Natural killer cell (primary cell): ENCODE measurements at regions of chr15 and their contacts with region 1.

Region 1: DNA sequence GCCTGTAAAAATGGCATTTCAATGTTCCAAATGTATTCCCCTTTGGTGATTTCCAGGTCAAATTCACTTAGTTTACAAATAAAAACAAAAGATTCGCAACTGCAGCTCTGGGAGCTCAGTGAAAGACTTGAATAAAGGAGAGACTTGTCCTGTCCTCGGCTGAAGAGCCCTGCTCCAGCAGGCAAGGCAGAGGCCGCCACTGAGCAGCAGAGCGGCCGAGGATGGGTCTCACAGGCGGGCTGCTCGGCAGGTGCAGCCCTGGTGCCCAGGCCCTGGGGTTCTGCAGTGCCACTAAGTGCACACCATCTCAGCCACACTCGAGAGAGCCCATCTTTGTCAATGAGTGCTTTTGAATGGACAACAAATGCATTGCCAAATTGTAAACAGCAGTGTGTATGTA is 856.2 kb downstream of the AGBL1 start:
- DNase-seq: no peak
- ATAC-seq: no peak
- H3K4me3 ChIP-seq: no peak overlapping the region
- H3K4me3 Mint-ChIP-seq: no peak overlapping the region
- H3K27ac ChIP-seq: no peak overlapping the region
- H3K27ac Mint-ChIP-seq: no peak overlapping the region
- H3K4me1 ChIP-seq: no peaks in the 10 kb centered on the region
- H3K4me1 Mint-ChIP-seq: no peaks in the 10 kb centered on the region
- H3K27me3 ChIP-seq: no peaks in the 10 kb centered on the region
- H3K27me3 Mint-ChIP-seq: no peaks in the 10 kb centered on the region
- CTCF ChIP-seq: no peak

Region 2: DNA sequence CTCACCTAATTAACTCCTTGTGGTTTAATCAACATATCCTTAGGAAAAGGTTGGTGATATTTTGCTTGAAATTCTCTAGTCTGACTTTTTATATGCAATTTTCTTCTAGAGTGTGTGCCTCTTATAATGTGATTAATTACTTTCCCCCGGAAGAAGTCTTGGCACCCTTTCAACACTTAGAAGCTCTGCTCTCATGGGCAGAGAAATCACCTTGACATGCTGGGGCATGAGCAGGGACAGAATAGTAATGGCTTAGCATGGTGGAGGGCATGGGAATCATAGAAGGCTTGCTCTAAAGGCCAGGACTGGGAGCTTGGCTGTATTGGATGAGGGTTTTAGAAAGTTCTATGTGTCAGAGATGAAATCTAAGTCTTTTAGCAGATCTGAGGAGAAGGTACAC is 562.7 kb before region 1 on chr15:
- intact Hi-C with region 1: no loop called
- DNase-seq: no peak
- ATAC-seq: no peak
- H3K4me3 ChIP-seq: no peak overlapping the region
- H3K4me3 Mint-ChIP-seq: no peak overlapping the region
- H3K27ac ChIP-seq: no peak overlapping the region
- H3K27ac Mint-ChIP-seq: no peak overlapping the region
- H3K4me1 ChIP-seq: no peaks in the 10 kb centered on the region
- H3K4me1 Mint-ChIP-seq: no peaks in the 10 kb centered on the region
- H3K27me3 ChIP-seq: no peaks in the 10 kb centered on the region
- H3K27me3 Mint-ChIP-seq: peaks cover 0 to 4% of the 10 kb centered on the region in 2 donors
- CTCF ChIP-seq: no peak

Region 3: GRCh38 chr15:86892774-86893449 is 42.9 kb before region 1 on chr15:
- intact Hi-C with region 1: no loop called
- DNase-seq: no peak
- ATAC-seq: no peak
- H3K4me3 ChIP-seq: no peak overlapping the region
- H3K4me3 Mint-ChIP-seq: no peak overlapping the region
- H3K27ac ChIP-seq: no peak overlapping the region
- H3K27ac Mint-ChIP-seq: no peak overlapping the region
- H3K4me1 ChIP-seq: no peaks in the 10 kb centered on the region
- H3K4me1 Mint-ChIP-seq: no peaks in the 10 kb centered on the region
- H3K27me3 ChIP-seq: no peaks in the 10 kb centered on the region
- H3K27me3 Mint-ChIP-seq: no peaks in the 10 kb centered on the region
- CTCF ChIP-seq: no peak

Region 4: GRCh38 chr15:86988033-86988432 is 52.2 kb after region 1 on chr15:
- intact Hi-C with region 1: loop called (anchors 10 kb)
- DNase-seq: no peak
- ATAC-seq: no peak
- H3K4me3 ChIP-seq: no peak overlapping the region
- H3K4me3 Mint-ChIP-seq: no peak overlapping the region
- H3K27ac ChIP-seq: no peak overlapping the region
- H3K27ac Mint-ChIP-seq: no peak overlapping the region
- H3K4me1 ChIP-seq: no peaks in the 10 kb centered on the region
- H3K4me1 Mint-ChIP-seq: no peaks in the 10 kb centered on the region
- H3K27me3 ChIP-seq: no peaks in the 10 kb centered on the region
- H3K27me3 Mint-ChIP-seq: no peaks in the 10 kb centered on the region
- CTCF ChIP-seq: no peak

Region 5: DNA sequence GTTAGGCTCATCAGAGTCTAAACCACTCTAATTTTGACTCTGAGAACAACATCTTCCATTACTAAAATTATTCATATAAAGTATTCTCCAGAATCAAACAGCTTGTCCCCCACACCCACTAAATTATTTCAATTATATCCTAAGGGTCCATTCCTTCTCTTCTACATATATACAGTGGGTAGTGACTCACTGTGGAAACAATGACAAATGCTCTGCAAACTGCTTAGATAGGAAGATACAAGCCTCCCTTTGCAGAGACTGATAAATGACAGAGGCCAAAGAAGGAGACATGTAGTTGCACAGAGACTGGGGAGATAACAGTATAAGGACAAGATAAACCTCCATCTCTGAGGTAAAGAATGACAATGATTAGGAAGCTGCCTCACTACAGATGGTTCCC is 231.2 kb after region 1 on chr15:
- intact Hi-C with region 1: no loop called
- DNase-seq: no peak
- ATAC-seq: no peak
- H3K4me3 ChIP-seq: no peak overlapping the region
- H3K4me3 Mint-ChIP-seq: no peak overlapping the region
- H3K27ac ChIP-seq: no peak overlapping the region
- H3K27ac Mint-ChIP-seq: no peak overlapping the region
- H3K4me1 ChIP-seq: no peaks in the 10 kb centered on the region
- H3K4me1 Mint-ChIP-seq: no peaks in the 10 kb centered on the region
- H3K27me3 ChIP-seq: no peaks in the 10 kb centered on the region
- H3K27me3 Mint-ChIP-seq: no peaks in the 10 kb centered on the region
- CTCF ChIP-seq: no peak